Right ventricle myocardium inferior (tissue), 1 donor: ENCODE measurements at regions of chr11 and their contacts with region 1.

Region 1: DNA sequence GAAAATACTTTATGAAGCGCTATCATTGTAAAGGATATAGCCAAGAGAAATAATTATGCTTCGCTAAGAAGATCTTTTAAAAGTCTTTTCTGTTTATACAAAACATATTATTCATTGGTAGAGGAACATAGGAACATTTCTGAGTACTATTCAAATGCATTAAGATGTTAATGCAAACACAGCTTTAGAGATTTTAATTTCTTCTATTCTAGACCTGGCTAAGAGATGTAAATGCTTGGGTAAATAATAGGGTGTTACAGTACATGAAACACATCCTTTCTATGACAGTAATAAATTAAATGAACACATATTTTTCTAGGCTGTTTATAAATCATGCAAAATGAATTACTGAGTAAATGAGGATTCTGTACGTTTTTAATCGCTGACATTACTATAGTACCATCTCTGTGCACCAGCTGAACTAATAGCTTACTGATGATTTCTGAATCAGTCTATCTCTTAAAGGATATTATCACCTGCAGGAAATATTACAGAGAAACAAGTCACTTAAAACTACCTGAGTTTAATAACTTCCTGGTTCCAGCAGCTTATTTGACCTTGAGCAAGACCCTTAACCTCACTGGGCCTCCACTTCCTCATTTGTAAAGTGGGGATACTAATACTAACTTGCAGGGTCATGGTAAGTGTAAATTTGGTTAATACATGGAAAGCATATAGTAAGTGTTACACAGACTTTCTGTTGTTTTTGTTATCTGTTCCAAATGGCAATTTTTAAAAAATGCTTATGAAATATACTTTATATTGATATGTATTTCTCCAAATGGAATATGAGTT is 344.9 kb downstream of the DYNC2H1 start:
- DNase-seq: no peak
- ATAC-seq: no peak

Region 2: DNA sequence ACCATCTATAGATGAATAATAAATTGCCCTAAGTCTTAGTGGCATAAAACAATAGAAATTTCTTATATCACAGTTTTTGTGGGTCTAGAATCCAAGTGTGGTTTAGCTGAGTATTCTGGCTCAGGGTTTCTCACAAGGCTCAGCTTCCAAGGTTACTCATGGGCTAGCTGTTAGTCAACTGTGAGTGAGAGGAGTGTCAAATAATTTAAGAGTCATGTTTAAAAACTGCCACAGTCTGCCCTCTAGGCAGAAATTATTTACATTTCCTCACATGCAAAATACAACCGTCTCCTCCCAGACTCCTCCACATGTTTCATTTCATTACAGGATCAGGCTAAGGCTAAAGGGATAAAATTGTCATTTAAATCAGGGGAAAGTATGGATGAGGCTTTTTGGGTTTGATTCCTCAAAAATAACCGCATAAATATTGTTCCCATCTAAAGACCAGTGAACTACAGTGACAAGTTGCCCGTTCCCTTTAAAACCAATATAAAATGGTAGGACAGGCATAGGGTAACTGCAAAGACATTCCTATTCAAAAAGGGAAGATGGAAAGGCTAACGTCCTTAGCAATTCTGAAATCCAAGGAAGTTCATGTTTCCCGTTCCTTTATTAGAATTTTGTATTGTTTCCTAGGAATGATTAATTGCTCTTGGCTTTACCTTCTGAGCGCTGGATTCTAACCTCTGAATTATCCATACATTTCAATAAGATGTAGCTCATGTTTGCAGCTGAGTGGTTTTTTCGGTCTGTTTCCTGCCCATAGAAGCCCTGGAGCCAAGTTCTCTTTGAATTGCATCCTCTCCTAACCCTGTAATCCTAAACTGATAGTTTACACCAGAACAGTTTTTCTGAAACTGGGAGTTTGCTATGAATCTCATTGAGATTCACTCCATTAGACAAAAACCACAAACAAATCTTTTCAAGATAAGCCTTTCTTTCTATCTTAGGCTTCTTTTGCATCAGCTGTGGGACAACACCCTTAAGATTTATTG is 20.4 kb before region 1 on chr11:
- intact Hi-C with region 1: loop called (anchors 2 kb)
- DNase-seq: no peak
- ATAC-seq: no peak